K562 (cell line): ENCODE measurements at regions of chr2 and their contacts with region 1.

Region 1: DNA sequence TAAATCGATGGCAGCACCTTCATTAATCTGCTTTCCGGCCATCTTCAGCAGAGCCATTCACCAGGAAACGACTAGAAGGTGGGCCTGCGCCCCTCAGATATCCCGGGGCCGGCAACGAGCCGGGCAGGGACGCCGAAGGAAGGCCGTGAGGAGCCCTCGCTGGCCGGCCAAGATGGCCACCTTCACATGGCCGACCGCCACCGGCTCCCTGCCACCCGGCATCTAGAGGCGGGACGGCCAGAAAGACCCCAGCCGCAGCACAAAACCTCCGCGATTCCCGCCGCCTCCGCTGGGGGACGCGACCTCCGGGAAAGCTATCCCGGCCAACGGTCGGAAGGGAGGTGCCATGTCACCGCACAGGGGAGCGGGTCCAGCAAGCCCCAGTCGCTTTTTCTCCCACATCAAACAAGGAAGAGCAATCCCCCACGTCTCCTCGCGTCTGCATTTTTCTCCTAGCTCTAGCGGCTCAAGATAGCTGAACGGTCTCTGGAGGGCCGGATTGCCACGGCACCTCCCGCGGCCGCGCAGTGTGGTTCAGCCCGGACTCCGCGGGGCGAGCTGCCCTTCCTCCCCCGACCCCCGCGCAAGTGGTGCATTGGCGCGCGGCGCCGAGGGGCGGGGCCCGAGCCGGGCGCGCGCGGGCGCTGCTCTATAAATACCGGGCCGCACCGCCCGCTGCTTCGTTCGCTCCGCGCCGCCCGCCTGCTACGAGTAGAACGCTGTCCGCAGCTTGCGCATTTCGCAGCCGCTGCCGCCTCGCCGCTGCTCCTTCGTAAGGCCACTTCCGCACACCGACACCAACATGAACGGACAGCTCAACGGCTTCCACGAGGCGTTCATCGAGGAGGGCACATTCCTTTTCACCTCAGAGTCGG is at the start of gene MAT2A:
- DNase-seq: peak; percentile 88 to 95 (median 91)
- ATAC-seq: peak; percentile 73
- H3K4me3 ChIP-seq: peak within 1 kb of the TSS; percentile 68
- H3K27ac ChIP-seq: peak within 1 kb of the TSS; percentile 100
- H3K4me1 ChIP-seq: peaks cover 9 to 24% of the 10 kb centered on the region in 2 experiments
- H3K27me3 ChIP-seq: no peaks in the 10 kb centered on the region
- CTCF ChIP-seq: peak; percentile 78 to 86 (median 82)
- EP300 ChIP-seq: peak; percentile 70
- POLR2A ChIP-seq: peak; percentile 100
- RAD21 ChIP-seq: peak; percentile 60 to 72
- polyA plus RNA-seq, gene MAT2A: 130 to 197 TPM

Region 2: GRCh38 chr2:85354286-85355072 is 184.2 kb before region 1 on chr2 and contains the starts of genes ELMOD3 and RETSAT:
- CTCF ChIA-PET with region 1: no interaction called
- POLR2A ChIA-PET with region 1: interaction called, 15 read pairs
- in situ Hi-C with region 1: no loop called
- intact Hi-C with region 1: no loop called
- DNase-seq: peak; percentile 96 to 99 (median 96)
- ATAC-seq: peak; percentile 98
- H3K4me3 ChIP-seq: peak within 1 kb of the TSS; percentile 83
- H3K27ac ChIP-seq: peak within 1 kb of the TSS; percentile 84
- H3K4me1 ChIP-seq: peaks cover 9 to 15% of the 10 kb centered on the region in 2 experiments
- H3K27me3 ChIP-seq: no peaks in the 10 kb centered on the region
- CTCF ChIP-seq: no peak
- EP300 ChIP-seq: peak; percentile 44
- POLR2A ChIP-seq: peak; percentile 93
- RAD21 ChIP-seq: no peak; a peak in 1 of 4 replicates
- polyA plus RNA-seq, gene ELMOD3: 2.7 to 6.4 TPM
- polyA plus RNA-seq, gene RETSAT: 1.9 to 5.6 TPM

Region 3: GRCh38 chr2:85420536-85421259 is 118.0 kb before region 1 on chr2:
- CTCF ChIA-PET with region 1: interaction called, 7 read pairs
- POLR2A ChIA-PET with region 1: interaction called, 1,576 read pairs
- in situ Hi-C with region 1: no loop called
- intact Hi-C with region 1: no loop called
- DNase-seq: peak; percentile 88 to 94 (median 90)
- ATAC-seq: peak; percentile 76
- H3K4me3 ChIP-seq: no peak overlapping the region; the same call in 1 of the 2 replicates
- H3K27ac ChIP-seq: peak overlapping the region; percentile 79
- H3K4me1 ChIP-seq: peaks cover 50 to 59% of the 10 kb centered on the region in 2 experiments
- H3K27me3 ChIP-seq: no peaks in the 10 kb centered on the region
- CTCF ChIP-seq: peak; percentile 95 to 99 (median 98)
- EP300 ChIP-seq: peak; percentile 32; the same call in 1 of the 2 replicates
- POLR2A ChIP-seq: peak; percentile 25; the same call in 1 of the 2 replicates
- RAD21 ChIP-seq: peak; percentile 100

Region 4: DNA sequence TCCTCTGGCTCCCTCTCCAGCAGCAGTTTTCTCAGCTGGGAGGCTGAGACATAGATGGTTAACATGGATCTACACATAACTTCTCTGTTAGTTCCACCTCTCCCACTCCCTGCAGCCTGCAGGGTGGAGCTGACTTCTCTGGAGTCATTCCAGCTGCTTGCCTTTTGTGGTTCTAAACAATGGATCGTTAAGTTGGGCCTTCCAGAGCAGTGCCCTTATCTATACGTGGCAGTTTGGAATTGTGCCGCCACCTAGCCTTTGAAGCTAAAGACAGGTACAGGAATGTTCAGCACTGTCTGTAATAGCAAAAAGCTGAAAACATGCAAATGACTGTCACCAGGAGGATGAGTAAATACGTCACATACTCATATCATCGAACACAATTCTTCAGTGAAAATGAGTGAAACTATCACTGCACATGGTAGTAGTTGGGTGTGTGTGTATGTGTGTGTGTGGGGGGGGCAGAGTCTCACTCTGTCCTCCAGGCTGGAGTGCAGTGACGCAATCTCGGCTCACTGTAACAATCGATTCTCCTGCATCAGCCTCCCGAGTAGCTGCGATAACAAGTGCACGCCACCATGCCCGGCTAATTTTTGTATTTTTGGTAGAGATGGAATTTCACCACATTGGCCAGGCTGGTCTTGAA is 69.9 kb before region 1 on chr2:
- CTCF ChIA-PET with region 1: no interaction called
- POLR2A ChIA-PET with region 1: interaction called, 20 read pairs
- in situ Hi-C with region 1: no loop called
- intact Hi-C with region 1: loop called (anchors 2 kb)
- DNase-seq: peak; percentile 48 to 78 (median 70)
- ATAC-seq: peak; percentile 80
- H3K4me3 ChIP-seq: no peak overlapping the region
- H3K27ac ChIP-seq: peak overlapping the region; percentile 31; the same call in 2 of the 3 replicates
- H3K4me1 ChIP-seq: peaks cover 5 to 12% of the 10 kb centered on the region in 2 experiments; a peak in 4 of 5 replicates
- H3K27me3 ChIP-seq: no peaks in the 10 kb centered on the region
- CTCF ChIP-seq: no peak
- EP300 ChIP-seq: no peak; the same call in 1 of the 2 replicates
- POLR2A ChIP-seq: no peak
- RAD21 ChIP-seq: peak in 1 of 2 experiments; percentile 42; a peak in 2 of 4 replicates

Region 5: DNA sequence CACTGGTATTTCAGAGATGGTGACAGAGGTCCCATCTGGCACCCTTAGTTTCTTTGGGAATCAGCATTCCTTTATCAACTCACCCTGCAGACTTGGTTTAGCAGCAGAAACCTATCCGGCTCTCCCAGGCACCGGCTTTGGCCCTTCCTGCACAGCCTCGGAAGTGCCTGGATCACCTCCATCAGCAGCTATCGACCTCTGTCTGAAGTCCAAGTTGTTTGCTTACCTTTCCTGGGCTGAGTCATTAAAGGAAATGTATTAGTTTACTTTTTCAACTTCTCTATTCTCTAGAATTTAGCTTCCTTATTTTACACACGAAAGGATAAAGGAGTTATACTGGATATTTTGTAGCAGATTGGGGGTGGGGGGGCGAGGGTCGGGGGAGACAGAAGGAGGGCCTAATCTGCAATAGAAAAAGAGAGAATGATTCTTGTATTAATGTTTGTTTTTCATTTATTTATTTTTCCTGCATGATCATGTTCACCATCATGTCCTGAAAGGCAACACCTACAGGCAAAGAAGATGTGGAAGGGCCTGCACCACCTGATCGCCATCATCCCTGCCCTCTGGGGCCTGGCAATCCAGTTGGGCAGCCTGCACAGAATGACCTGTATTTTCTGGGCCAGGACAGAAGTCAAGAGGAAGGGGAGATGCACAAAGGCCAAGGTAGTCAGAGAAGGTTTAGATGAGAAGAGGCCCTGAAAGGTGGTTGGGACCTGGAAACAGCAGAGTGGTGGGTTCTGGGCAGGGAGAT is 21.9 kb before region 1 on chr2:
- CTCF ChIA-PET with region 1: no interaction called
- POLR2A ChIA-PET with region 1: interaction called, 11 read pairs
- in situ Hi-C with region 1: no loop called
- intact Hi-C with region 1: no loop called
- DNase-seq: no peak
- ATAC-seq: no peak
- H3K4me3 ChIP-seq: no peak overlapping the region
- H3K27ac ChIP-seq: no peak overlapping the region
- H3K4me1 ChIP-seq: peaks cover 4 to 7% of the 10 kb centered on the region in 2 experiments; a peak in 2 of 5 replicates
- H3K27me3 ChIP-seq: no peaks in the 10 kb centered on the region
- CTCF ChIP-seq: no peak
- EP300 ChIP-seq: no peak
- POLR2A ChIP-seq: no peak
- RAD21 ChIP-seq: no peak

Region 6: GRCh38 chr2:85561317-85561979 is 22.7 kb after region 1 on chr2 and contains the start of gene GGCX:
- CTCF ChIA-PET with region 1: no interaction called
- POLR2A ChIA-PET with region 1: interaction called, 358 read pairs
- in situ Hi-C with region 1: no loop called
- intact Hi-C with region 1: no loop called
- DNase-seq: peak; percentile 90 to 97 (median 92)
- ATAC-seq: peak; percentile 94
- H3K4me3 ChIP-seq: peak within 1 kb of the TSS; percentile 79
- H3K27ac ChIP-seq: peak within 1 kb of the TSS; percentile 95
- H3K4me1 ChIP-seq: peaks cover 18 to 26% of the 10 kb centered on the region in 2 experiments
- H3K27me3 ChIP-seq: no peaks in the 10 kb centered on the region
- CTCF ChIP-seq: peak in 1 of 3 experiments; percentile 12; a peak in 1 of 6 replicates
- EP300 ChIP-seq: no peak
- POLR2A ChIP-seq: peak; percentile 95
- RAD21 ChIP-seq: peak in 1 of 2 experiments; percentile 8; a peak in 1 of 4 replicates
- polyA plus RNA-seq, gene GGCX: 46.7 to 47.1 TPM